ENCODE measurements at regions of chr11 and their contacts with region 1.

Region 1: GRCh38 chr11:83871054-83871453 is 584.9 kb upstream of the CCDC90B start:
- DNase-seq: no peak
- ATAC-seq: no peak
- H3K4me3 ChIP-seq: no peak overlapping the region
- H3K27ac ChIP-seq: no peak overlapping the region
- H3K4me1 ChIP-seq: no peaks in the 10 kb centered on the region
- H3K27me3 ChIP-seq: no peaks in the 10 kb centered on the region
- CTCF ChIP-seq: no peak
- POLR2A ChIP-seq: no peak

Region 2: GRCh38 chr11:83895516-83895915 is 24.5 kb after region 1 on chr11:
- intact Hi-C with region 1: loop called in 1 of 10 experiments (anchors 1 kb)
- DNase-seq: no peak
- ATAC-seq: peak in 2 of 4 donors; percentile 32 to 59
- H3K4me3 ChIP-seq: no peak overlapping the region
- H3K27ac ChIP-seq: no peak overlapping the region
- H3K4me1 ChIP-seq: no peaks in the 10 kb centered on the region
- H3K27me3 ChIP-seq: no peaks in the 10 kb centered on the region
- CTCF ChIP-seq: no peak
- POLR2A ChIP-seq: no peak